Activated CD4-positive, alpha-beta memory T cell treated with anti-CD3 and anti-CD28 coated beads for 36 hours (primary cell): ENCODE measurements at regions of chr6 and their contacts with region 1.

Region 1: GRCh38 chr6:90431576-90431975 is 134.9 kb upstream of the BACH2 start:
- DNase-seq: no peak
- H3K4me3 Mint-ChIP-seq: no peak overlapping the region
- H3K27ac Mint-ChIP-seq: no peak overlapping the region
- H3K4me1 Mint-ChIP-seq: peaks cover 24% of the 10 kb centered on the region
- H3K27me3 Mint-ChIP-seq: no peaks in the 10 kb centered on the region

Region 2: GRCh38 chr6:90444160-90444714 is 12.7 kb after region 1 on chr6:
- CTCF ChIA-PET with region 1: interaction called, 5 read pairs
- POLR2A ChIA-PET with region 1: interaction called, 4 read pairs
- intact Hi-C with region 1: loop called (anchors 1 kb)
- DNase-seq: no peak
- H3K4me3 Mint-ChIP-seq: peak overlapping the region; percentile 48
- H3K27ac Mint-ChIP-seq: peak overlapping the region; percentile 92
- H3K4me1 Mint-ChIP-seq: peaks cover 47% of the 10 kb centered on the region
- H3K27me3 Mint-ChIP-seq: no peaks in the 10 kb centered on the region

Region 3: GRCh38 chr6:90466154-90466940 is 34.8 kb after region 1 on chr6:
- CTCF ChIA-PET with region 1: no interaction called
- POLR2A ChIA-PET with region 1: no interaction called
- intact Hi-C with region 1: no loop called
- DNase-seq: peak; percentile 60
- H3K4me3 Mint-ChIP-seq: peak overlapping the region; percentile 27
- H3K27ac Mint-ChIP-seq: peak overlapping the region; percentile 96
- H3K4me1 Mint-ChIP-seq: peaks cover 84% of the 10 kb centered on the region
- H3K27me3 Mint-ChIP-seq: peaks cover 1% of the 10 kb centered on the region

Region 4: DNA sequence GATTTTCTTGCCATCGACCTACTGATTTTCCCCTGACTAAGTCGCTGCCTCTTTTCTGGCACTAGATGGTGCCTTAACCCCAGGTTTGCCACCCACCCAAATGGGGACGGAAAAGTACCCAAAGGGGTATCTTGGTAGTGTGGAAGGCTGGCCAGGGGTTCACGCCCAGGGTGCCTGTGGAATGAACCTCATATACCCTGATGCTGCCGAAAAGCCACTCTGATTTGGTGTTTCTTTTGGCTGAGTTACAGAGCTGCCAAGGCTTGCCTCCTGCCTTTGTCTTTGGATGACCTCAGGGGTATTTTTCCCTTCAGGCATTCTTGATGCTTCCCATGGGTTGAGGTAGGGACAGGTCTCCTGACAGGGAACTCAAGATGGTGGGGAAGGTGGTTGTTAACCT is 77.2 kb after region 1 on chr6:
- CTCF ChIA-PET with region 1: no interaction called
- POLR2A ChIA-PET with region 1: no interaction called
- intact Hi-C with region 1: no loop called
- DNase-seq: no peak
- H3K4me3 Mint-ChIP-seq: no peak overlapping the region
- H3K27ac Mint-ChIP-seq: no peak overlapping the region
- H3K4me1 Mint-ChIP-seq: no peaks in the 10 kb centered on the region
- H3K27me3 Mint-ChIP-seq: no peaks in the 10 kb centered on the region